Activated CD4-positive, alpha-beta memory T cell treated with anti-CD3 and anti-CD28 coated beads for 36 hours (primary cell): ENCODE measurements at regions of chr19 and their contacts with region 1.

Region 1: GRCh38 chr19:43826787-43827754 is at the start of gene ZNF283:
- DNase-seq: peak; percentile 92
- H3K4me3 Mint-ChIP-seq: peak within 1 kb of the TSS; percentile 88
- H3K27ac Mint-ChIP-seq: peak within 1 kb of the TSS; percentile 54
- H3K4me1 Mint-ChIP-seq: peaks cover 16% of the 10 kb centered on the region
- H3K27me3 Mint-ChIP-seq: no peaks in the 10 kb centered on the region
- total RNA-seq, gene ZNF283: 5.2 to 8.1 TPM

Region 2: DNA sequence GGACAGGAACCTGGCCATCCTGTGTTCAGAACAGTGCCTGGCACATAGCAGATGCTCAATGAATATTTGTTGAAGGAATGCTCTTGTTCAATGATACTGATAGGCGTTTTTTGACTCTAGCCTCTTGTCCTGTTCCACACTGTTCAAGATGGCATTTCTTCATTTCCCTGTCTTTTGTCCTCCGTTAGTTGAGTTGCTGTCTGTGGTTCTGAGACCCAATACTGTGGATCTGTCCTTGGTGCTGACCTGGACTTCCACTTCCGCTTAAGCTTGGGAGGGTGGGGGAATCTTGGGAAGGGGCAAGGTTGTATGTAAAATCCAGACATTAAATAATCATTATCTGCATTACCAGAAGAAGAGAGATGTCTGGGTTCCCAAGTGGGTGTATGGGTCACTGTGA is 38.0 kb before region 1 on chr19:
- CTCF ChIA-PET with region 1: no interaction called
- POLR2A ChIA-PET with region 1: no interaction called
- intact Hi-C with region 1: no loop called
- DNase-seq: no peak
- H3K4me3 Mint-ChIP-seq: no peak overlapping the region
- H3K27ac Mint-ChIP-seq: no peak overlapping the region
- H3K4me1 Mint-ChIP-seq: peaks cover 12% of the 10 kb centered on the region
- H3K27me3 Mint-ChIP-seq: peaks cover 6% of the 10 kb centered on the region

Region 3: GRCh38 chr19:43855616-43856015 is 28.5 kb after region 1 on chr19:
- CTCF ChIA-PET with region 1: no interaction called
- POLR2A ChIA-PET with region 1: no interaction called
- intact Hi-C with region 1: no loop called
- DNase-seq: no peak
- H3K4me3 Mint-ChIP-seq: no peak overlapping the region
- H3K27ac Mint-ChIP-seq: no peak overlapping the region
- H3K4me1 Mint-ChIP-seq: no peaks in the 10 kb centered on the region
- H3K27me3 Mint-ChIP-seq: no peaks in the 10 kb centered on the region

Region 4: GRCh38 chr19:43901395-43902390 is 74.6 kb after region 1 on chr19:
- CTCF ChIA-PET with region 1: no interaction called
- POLR2A ChIA-PET with region 1: no interaction called
- intact Hi-C with region 1: loop called (anchors 1 kb)
- DNase-seq: peak; percentile 75
- H3K4me3 Mint-ChIP-seq: peak overlapping the region; percentile 80
- H3K27ac Mint-ChIP-seq: peak overlapping the region; percentile 53
- H3K4me1 Mint-ChIP-seq: peaks cover 13% of the 10 kb centered on the region
- H3K27me3 Mint-ChIP-seq: no peaks in the 10 kb centered on the region

Region 5: GRCh38 chr19:43934985-43935708 is 108.1 kb after region 1 on chr19 and contains the start of gene ZNF45:
- CTCF ChIA-PET with region 1: no interaction called
- POLR2A ChIA-PET with region 1: no interaction called
- intact Hi-C with region 1: loop called (anchors 2 kb)
- DNase-seq: peak; percentile 92
- H3K4me3 Mint-ChIP-seq: peak within 1 kb of the TSS; percentile 93
- H3K27ac Mint-ChIP-seq: peak within 1 kb of the TSS; percentile 81
- H3K4me1 Mint-ChIP-seq: peaks cover 9% of the 10 kb centered on the region
- H3K27me3 Mint-ChIP-seq: no peaks in the 10 kb centered on the region
- total RNA-seq, gene ZNF45: 7.7 to 9.6 TPM

Region 6: DNA sequence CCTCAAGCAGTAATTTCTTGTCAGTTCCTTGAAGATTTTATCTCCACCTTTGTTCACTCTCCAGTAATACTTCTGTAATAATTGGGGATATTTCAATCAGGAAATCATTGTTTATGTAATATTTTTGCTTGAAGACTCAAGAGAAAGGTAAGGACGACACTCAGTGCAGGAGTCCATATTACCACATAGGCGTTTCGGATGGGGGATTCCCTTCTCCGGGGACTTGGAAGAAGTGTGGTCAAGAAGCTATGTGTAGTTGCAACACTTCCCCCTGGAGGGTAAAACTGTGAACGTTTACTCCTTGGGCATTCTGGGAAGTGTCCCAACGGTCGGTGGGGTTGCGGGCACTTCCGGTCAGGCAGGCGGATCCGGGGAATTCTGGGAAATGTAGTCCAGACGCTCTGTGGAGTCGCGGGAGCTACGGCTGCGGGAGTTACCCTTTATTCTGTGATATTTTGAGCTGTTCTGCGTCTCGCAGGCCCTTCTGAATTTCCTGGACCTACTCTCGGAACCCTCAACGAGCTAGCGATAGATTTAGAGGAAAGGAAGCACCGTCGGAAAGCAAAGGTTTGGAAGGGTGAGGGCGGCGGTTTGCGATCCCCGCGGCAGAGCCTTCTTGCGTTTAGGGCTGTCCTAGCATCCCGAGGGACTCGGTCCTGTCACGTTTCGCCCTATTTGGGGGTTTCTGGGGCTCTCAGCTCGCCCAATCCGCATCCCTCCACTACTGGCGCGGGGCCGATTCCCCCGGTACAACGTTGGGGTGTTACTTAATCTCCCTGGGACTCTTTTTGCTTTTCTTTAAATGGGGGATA is 124.0 kb after region 1 on chr19 and contains the start of gene ZNF221:
- CTCF ChIA-PET with region 1: no interaction called
- POLR2A ChIA-PET with region 1: no interaction called
- intact Hi-C with region 1: loop called (anchors 1 kb)
- DNase-seq: peak; percentile 82
- H3K4me3 Mint-ChIP-seq: peak within 1 kb of the TSS; percentile 92
- H3K27ac Mint-ChIP-seq: peak within 1 kb of the TSS; percentile 19
- H3K4me1 Mint-ChIP-seq: peaks cover 6% of the 10 kb centered on the region
- H3K27me3 Mint-ChIP-seq: peaks cover 15% of the 10 kb centered on the region
- total RNA-seq, gene ZNF221: 0.73 to 1.0 TPM

Region 7: GRCh38 chr19:44071824-44072542 is 244.9 kb after region 1 on chr19 and contains the start of gene ZNF284:
- CTCF ChIA-PET with region 1: no interaction called
- POLR2A ChIA-PET with region 1: no interaction called
- intact Hi-C with region 1: loop called (anchors 1 kb)
- DNase-seq: peak; percentile 87
- H3K4me3 Mint-ChIP-seq: peak within 1 kb of the TSS; percentile 87
- H3K27ac Mint-ChIP-seq: peak within 1 kb of the TSS; percentile 43
- H3K4me1 Mint-ChIP-seq: peaks cover 20% of the 10 kb centered on the region
- H3K27me3 Mint-ChIP-seq: no peaks in the 10 kb centered on the region
- total RNA-seq, gene ZNF284: 1.1 to 1.4 TPM

Region 8: DNA sequence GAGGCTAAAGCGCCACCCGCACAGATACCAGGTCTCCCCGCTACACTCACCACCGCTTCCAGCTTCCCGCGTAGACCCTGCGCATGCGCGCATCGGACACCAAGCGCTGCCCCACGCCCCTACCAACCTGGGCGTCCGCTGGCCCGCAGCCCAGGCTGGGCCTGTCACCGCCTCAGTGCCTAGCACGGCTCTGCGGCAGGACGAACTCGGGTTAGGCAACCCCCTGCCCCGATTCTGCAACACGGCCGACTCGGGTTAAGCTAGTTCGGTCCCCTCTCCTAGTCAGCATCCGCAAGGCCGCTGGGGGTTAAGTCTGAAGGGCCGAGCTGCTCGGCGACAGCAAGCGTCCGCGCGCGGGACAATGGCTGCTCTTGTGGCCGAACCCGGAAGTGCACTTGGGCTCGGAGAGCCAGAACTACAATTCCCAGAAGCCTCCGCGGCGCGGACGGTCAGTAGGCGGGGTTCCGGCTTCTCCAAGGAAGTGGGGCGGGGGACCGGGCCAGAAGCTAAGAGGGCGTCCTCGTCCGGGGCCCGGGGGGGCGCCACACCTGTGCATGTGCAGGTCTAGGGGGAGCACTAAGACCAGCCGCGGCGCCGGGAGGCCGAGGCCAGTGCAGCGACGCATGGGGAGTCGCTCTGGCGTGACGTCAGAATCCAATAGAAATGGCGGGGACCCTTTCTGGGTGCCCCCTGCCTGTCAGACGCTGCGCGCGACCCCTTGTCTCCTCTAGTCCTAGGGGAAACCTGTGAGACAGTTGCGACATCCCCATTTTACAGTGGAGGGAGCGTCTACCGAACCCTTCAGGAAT is 673.3 kb after region 1 on chr19 and contains the start of gene ZNF180:
- CTCF ChIA-PET with region 1: interaction called, 3 read pairs
- POLR2A ChIA-PET with region 1: no interaction called
- intact Hi-C with region 1: loop called (anchors 2 kb)
- DNase-seq: peak; percentile 96
- H3K4me3 Mint-ChIP-seq: peak within 1 kb of the TSS; percentile 87
- H3K27ac Mint-ChIP-seq: peak within 1 kb of the TSS; percentile 90
- H3K4me1 Mint-ChIP-seq: peaks cover 23% of the 10 kb centered on the region
- H3K27me3 Mint-ChIP-seq: peaks cover 6% of the 10 kb centered on the region
- total RNA-seq, gene ZNF180: 4.3 to 5.4 TPM